AG04450 (cell line): ENCODE measurements at regions of chr10 and their contacts with region 1.

Region 1: GRCh38 chr10:6239213-6239991 is 36.7 kb downstream of the PFKFB3 start:
- DNase-seq: peak; percentile 92
- H3K4me3 ChIP-seq: no peak overlapping the region
- H3K27ac ChIP-seq: peak overlapping the region; percentile 68
- H3K27me3 ChIP-seq: no peaks in the 10 kb centered on the region
- CTCF ChIP-seq: no peak

Region 2: GRCh38 chr10:6163364-6164270 is 75.8 kb before region 1 on chr10:
- CTCF ChIA-PET with region 1: no interaction called
- POLR2A ChIA-PET with region 1: interaction called, 12 read pairs
- DNase-seq: no peak
- H3K4me3 ChIP-seq: peak overlapping the region; percentile 78
- H3K27ac ChIP-seq: peak overlapping the region; percentile 47
- H3K27me3 ChIP-seq: no peaks in the 10 kb centered on the region
- CTCF ChIP-seq: no peak

Region 3: DNA sequence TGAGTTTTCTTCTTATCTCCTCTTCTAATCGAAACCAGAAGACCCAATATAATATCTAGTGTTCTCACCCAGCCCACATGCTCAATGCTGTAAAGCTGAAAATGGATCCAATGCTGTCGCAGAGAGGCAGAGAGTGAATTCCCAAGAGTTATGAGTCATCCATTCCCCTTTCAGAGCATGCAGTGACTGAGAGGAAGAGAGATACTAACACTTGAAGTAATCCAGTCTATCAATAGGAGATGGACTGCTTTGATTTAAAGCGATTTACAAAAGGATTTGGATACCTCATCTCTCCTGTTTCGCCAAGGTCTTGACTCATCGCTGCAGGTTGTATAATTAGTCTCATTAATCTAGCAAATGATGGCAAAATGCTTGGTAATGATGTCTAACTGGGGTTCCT is 382.1 kb after region 1 on chr10:
- CTCF ChIA-PET with region 1: no interaction called
- POLR2A ChIA-PET with region 1: no interaction called
- DNase-seq: no peak
- H3K4me3 ChIP-seq: no peak overlapping the region
- H3K27ac ChIP-seq: no peak overlapping the region
- H3K27me3 ChIP-seq: no peaks in the 10 kb centered on the region
- CTCF ChIP-seq: no peak